ENCODE measurements at regions of chr3 and their contacts with region 1.

Region 1: GRCh38 chr3:72872183-72872582 is 15.7 kb upstream of the GXYLT2 start:
- DNase-seq: no peak
- CTCF ChIP-seq: no peak

Region 2: GRCh38 chr3:72887705-72888545 is 15.7 kb after region 1 on chr3 and contains the start of gene GXYLT2:
- CTCF ChIA-PET with region 1: interaction called, 10 read pairs
- POLR2A ChIA-PET with region 1: no interaction called
- DNase-seq: peak; percentile 68
- CTCF ChIP-seq: peak; percentile 14

Region 3: DNA sequence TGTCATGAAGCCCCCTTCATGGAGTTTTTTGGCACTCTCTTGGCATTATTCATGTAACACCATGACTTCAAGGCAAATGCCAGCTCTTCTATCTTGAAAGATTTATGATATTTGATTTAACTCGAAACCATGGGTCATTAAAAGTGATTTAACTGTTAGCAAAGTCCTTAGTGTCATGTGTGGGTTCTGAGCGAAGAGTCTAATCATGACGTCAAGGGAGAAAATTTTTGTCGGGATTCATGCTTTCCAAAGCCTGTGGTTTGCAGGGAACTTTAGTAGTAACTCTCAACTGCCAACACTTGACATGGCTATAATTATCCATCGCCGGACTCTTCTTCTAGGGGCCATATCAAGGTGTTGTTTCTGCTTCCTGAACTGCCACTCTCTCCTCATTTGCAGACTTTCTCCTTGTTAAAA is 27.2 kb after region 1 on chr3:
- CTCF ChIA-PET with region 1: no interaction called
- POLR2A ChIA-PET with region 1: no interaction called
- DNase-seq: no peak
- CTCF ChIP-seq: no peak

Region 4: GRCh38 chr3:73827725-73828211 is 955.6 kb after region 1 on chr3:
- CTCF ChIA-PET with region 1: no interaction called
- POLR2A ChIA-PET with region 1: no interaction called
- DNase-seq: no peak
- CTCF ChIP-seq: no peak

Measured in GM10248 (cell line).